PC-9 (cell line): ENCODE measurements at regions of chr21 and their contacts with region 1.

Region 1: DNA sequence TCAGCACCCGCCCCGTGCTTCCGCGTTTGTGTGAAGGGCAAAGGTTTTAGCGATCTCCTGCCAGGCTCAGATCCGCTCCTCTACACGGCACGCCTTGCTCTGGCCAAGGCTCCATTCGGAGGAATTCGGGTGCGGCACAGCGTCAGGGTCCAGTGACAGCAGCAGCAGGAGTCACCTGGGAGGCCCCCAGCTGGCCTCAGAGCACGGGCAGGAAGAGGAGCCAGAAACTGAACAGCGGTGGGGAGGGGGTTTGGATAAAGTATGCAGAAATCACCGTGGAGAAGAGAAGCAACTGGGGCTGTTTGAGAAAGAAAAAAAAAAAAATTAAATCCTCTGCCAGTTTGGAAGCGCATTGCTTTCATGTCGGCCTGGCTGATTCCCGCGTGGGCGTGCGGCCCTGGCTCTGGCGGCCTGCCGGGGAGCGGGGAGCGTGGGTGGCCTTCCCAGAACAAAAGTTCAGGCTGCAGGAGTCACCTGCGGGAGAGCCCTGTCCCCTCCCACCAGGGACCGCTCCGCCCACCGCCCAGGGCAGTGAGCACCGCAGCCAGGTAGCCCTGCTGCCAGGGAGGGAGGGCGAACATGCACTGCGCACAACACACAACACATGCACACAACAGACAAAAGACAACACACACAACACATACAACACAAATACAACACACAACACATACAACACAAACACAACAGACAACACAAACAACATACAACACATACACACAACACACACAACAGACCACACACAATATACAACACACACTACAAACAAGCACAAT is 107.6 kb downstream of the ETS2 start:
- DNase-seq: peak; percentile 85 to 87
- H3K4me3 ChIP-seq: peak overlapping the region; percentile 48; the same call in 1 of the 2 replicates
- H3K27ac ChIP-seq: peak overlapping the region; percentile 77
- H3K4me1 ChIP-seq: peaks cover 48% of the 10 kb centered on the region
- H3K27me3 ChIP-seq: no peaks in the 10 kb centered on the region
- CTCF ChIP-seq: no peak

Region 2: DNA sequence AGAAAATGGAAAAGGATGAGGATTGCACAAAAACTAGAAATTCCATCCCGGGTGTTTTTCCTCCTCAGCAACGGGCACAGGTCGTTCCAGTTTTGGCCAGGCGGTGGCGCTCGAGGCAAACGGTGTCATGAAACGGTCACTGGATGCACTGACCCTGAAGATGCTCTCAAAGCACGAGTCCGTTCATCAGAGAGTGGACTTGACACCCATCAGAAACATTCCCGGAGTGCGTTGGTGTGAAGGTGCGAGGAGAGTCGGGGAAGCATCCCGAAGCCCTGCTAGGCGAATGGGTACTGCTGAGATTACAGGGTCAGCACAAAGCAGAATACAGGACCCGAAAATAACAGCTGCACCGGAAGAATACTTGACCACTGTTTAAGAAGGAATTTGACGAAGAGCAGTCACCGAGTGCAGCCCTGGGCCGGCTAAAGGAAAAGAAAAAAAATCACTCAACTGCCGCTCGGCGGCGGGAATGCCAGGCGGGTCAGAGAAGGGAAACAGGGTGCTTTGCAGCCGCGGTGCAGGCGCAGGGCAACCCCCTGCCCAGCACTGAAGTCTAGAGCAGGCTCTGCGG is 179.2 kb before region 1 on chr21:
- CTCF ChIA-PET with region 1: no interaction called
- POLR2A ChIA-PET with region 1: no interaction called
- intact Hi-C with region 1: loop called (anchors 5 kb)
- DNase-seq: peak; percentile 44 to 81
- H3K4me3 ChIP-seq: no peak overlapping the region
- H3K27ac ChIP-seq: no peak overlapping the region
- H3K4me1 ChIP-seq: no peaks in the 10 kb centered on the region
- H3K27me3 ChIP-seq: no peaks in the 10 kb centered on the region
- CTCF ChIP-seq: peak; percentile 89

Region 3: DNA sequence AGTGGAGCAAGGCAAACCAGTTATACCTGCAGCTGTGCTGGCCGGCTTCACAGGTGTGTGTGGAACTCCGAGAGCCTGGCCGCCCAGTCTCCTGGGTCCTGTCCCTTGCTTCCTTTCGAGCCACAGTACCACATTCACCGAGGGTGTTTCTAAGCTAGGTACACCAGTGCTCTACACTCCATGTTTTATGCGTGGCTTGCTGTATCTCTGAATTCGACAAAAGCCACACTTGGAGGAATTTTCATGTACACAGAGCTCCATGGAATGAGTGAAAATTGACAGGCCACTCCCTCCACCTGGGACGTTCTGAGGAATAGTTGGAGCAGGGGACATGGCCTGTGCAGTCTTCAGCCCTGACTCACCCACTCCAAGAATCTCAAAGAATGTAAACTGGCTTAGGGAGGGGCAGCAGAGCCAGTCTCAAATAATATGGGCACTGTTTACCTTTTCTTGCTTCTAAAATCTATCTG is 93.6 kb before region 1 on chr21:
- CTCF ChIA-PET with region 1: no interaction called
- POLR2A ChIA-PET with region 1: no interaction called
- intact Hi-C with region 1: loop called (anchors 1 kb)
- DNase-seq: peak; percentile 82 to 91
- H3K4me3 ChIP-seq: peak overlapping the region; percentile 16; the same call in 1 of the 2 replicates
- H3K27ac ChIP-seq: peak overlapping the region; percentile 91
- H3K4me1 ChIP-seq: peaks cover 26% of the 10 kb centered on the region
- H3K27me3 ChIP-seq: no peaks in the 10 kb centered on the region
- CTCF ChIP-seq: no peak

Region 4: DNA sequence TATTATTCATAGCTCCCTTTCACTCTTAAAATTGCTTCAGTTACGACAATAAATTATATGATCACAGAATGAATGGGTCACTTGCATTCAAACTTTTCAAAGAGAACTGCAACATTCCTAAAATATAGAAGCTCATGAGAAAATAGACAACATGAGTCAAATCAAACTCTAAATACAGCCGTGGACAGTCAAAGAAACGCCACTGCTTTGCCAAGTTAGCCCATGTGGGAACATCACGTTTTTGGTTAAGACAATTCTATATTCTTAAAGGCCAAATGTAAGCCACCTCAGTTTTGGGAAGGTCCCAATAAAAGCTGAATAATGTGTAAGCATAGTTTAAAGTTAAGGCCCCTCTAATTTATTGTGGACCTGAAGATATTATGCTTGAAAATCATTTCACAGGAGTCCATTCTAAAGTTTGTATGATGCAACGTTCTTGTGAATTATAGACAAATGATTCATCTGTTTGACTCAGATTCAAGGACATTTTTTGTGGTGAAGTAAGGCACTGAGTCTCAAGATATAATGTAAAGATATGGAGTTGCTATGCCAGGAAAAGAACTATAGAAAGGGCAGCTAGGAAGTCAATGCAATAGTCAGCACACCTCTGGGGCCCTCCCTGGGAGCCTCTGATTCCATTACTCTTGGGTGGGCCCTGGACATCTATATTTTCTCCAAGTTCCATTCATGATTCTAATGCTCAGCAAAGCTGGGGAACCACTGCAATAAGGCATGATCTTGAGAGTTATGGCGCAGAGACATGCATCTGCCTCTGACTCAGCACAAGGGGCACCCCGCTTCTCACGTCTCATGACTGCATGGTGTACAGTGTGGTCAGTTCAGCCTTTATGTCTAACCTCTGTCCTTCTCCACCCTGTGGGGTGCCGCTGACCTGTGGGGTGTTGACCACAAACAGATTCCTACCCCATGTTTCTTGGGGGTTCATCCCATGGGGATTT is 73.7 kb before region 1 on chr21:
- CTCF ChIA-PET with region 1: no interaction called
- POLR2A ChIA-PET with region 1: no interaction called
- intact Hi-C with region 1: loop called (anchors 5 kb)
- DNase-seq: peak; percentile 61 to 90
- H3K4me3 ChIP-seq: no peak overlapping the region
- H3K27ac ChIP-seq: peak overlapping the region; percentile 99
- H3K4me1 ChIP-seq: peaks cover 23% of the 10 kb centered on the region
- H3K27me3 ChIP-seq: no peaks in the 10 kb centered on the region
- CTCF ChIP-seq: no peak

Region 5: GRCh38 chr21:38853421-38853919 is 59.8 kb before region 1 on chr21:
- CTCF ChIA-PET with region 1: no interaction called
- POLR2A ChIA-PET with region 1: interaction called, 7 read pairs
- intact Hi-C with region 1: loop called (anchors 1 kb)
- DNase-seq: peak; percentile 87 to 91
- H3K4me3 ChIP-seq: no peak overlapping the region
- H3K27ac ChIP-seq: peak overlapping the region; percentile 37
- H3K4me1 ChIP-seq: peaks cover 13% of the 10 kb centered on the region
- H3K27me3 ChIP-seq: no peaks in the 10 kb centered on the region
- CTCF ChIP-seq: no peak

Region 6: GRCh38 chr21:39088831-39089380 is 175.6 kb after region 1 on chr21:
- CTCF ChIA-PET with region 1: no interaction called
- POLR2A ChIA-PET with region 1: no interaction called
- intact Hi-C with region 1: loop called (anchors 10 kb)
- DNase-seq: no peak
- H3K4me3 ChIP-seq: no peak overlapping the region
- H3K27ac ChIP-seq: no peak overlapping the region
- H3K4me1 ChIP-seq: no peaks in the 10 kb centered on the region
- H3K27me3 ChIP-seq: no peaks in the 10 kb centered on the region
- CTCF ChIP-seq: no peak

Region 7: DNA sequence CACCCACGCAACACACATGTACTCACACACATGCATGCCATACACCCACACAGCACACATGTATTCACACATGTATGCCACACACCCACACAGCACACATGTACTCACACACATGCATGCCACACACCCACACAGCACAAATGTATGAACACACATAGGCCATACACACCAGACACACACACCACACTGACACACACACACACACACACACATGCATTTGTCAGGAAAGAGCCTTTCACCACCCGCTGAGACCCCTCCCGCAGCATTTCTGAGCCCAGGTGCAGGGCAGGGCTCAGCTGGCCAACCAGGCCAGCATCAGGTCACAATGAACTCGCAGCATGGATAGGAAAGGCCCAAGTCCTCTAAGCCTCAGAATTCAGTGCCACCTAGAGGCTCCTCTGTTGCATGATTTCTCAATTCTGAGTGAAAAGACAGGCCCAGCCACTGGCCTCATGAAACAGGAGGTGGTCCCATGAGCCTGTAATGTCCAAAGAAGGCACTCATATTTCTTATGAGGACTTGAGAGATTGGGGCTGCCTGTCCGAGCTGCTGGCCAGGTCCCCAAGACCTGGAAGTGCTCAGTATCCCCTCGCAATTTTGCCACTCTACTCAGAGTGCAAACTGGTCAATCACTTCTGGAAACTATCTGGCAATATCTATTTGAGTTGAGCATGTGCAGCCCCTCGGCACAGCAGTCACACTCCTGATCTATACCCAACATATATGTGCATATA is 212.6 kb after region 1 on chr21:
- CTCF ChIA-PET with region 1: no interaction called
- POLR2A ChIA-PET with region 1: no interaction called
- intact Hi-C with region 1: loop called (anchors 5 kb)
- DNase-seq: peak; percentile 43 to 46
- H3K4me3 ChIP-seq: no peak overlapping the region
- H3K27ac ChIP-seq: no peak overlapping the region
- H3K4me1 ChIP-seq: no peaks in the 10 kb centered on the region
- H3K27me3 ChIP-seq: no peaks in the 10 kb centered on the region
- CTCF ChIP-seq: peak; percentile 63; the same call in 1 of the 2 replicates